Heart left ventricle (tissue), 16 donors: ENCODE measurements at regions of chr4 and their contacts with region 1.

Region 1: GRCh38 chr4:75736862-75737261 is 12.5 kb downstream of the USO1 start:
- DNase-seq: no peak
- ATAC-seq: peak; percentile 39 to 64 (median 50)
- H3K4me3 ChIP-seq: no peak overlapping the region
- H3K27ac ChIP-seq: peak overlapping the region in 4 of 12 donors; percentile 1 to 37 (median 26)
- H3K4me1 ChIP-seq: peaks cover 0 to 24% (median 13%) of the 10 kb centered on the region in 12 donors
- H3K27me3 ChIP-seq: no peaks in the 10 kb centered on the region
- CTCF ChIP-seq: no peak
- POLR2A ChIP-seq: no peak

Region 2: DNA sequence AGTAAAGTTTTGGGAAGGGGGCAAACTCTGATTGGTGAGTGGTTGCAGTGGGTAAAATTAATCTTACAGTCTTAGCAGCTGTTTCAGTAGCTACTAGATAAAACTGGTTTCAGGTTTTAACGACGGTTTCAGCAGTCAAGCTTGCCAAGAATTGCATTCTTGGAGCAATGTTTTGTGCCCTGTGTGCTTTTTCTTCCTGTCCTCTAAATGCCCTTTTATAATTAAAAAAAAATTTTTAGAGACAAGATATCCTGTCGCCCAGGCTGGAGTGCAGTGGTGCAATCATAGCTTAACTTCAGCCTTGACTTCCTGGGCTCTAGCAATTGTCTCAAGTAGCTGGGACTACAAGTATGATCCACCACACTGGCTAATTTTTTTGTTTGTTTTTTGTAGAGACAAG is 171.7 kb after region 1 on chr4:
- intact Hi-C with region 1: no loop called
- DNase-seq: no peak
- ATAC-seq: no peak
- H3K4me3 ChIP-seq: no peak overlapping the region
- H3K27ac ChIP-seq: no peak overlapping the region
- H3K4me1 ChIP-seq: peaks cover 0 to 7% (median 0%) of the 10 kb centered on the region in 12 donors
- H3K27me3 ChIP-seq: no peaks in the 10 kb centered on the region
- CTCF ChIP-seq: no peak
- POLR2A ChIP-seq: no peak

Region 3: DNA sequence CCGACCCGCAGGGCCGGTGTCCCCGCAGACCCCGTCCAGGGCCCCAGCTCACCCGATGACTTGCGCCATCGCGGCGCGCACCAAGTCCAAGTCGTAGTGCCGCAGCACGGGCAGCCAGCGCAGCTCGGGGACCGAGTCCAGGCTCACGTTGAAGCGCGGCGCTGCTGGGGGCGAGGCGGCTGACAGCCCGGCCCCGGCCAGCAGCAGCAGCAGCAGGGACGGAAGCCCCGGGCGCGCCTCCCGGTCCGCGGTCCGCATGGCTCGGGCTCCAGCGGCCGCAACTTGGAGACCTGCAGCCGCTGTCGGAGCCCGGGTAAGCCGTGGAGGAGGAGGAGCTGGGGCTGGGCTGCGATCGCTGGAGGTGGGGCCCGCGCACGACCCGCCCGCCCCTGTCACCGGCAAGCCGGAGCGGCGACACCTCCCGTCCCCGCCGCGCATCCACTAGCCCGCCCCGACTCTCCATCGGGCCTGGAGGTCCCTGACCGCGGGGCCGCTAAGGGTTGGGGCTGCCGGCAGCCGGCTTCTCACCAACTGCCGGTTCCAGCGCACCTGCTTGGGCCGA is 203.9 kb after region 1 on chr4 and contains the start of gene NAAA:
- intact Hi-C with region 1: loop called in 1 of 10 experiments (anchors 5 kb)
- DNase-seq: peak; percentile 74 to 92 (median 81)
- ATAC-seq: peak; percentile 77 to 97 (median 90)
- H3K4me3 ChIP-seq: peak within 1 kb of the TSS; percentile 64 to 94 (median 81)
- H3K27ac ChIP-seq: peak within 1 kb of the TSS in 11 of 12 donors; percentile 58 to 92 (median 80)
- H3K4me1 ChIP-seq: peaks cover 0 to 31% (median 4%) of the 10 kb centered on the region in 12 donors
- H3K27me3 ChIP-seq: no peaks in the 10 kb centered on the region
- CTCF ChIP-seq: peak in 6 of 12 donors; percentile 28 to 64 (median 46)
- POLR2A ChIP-seq: peak in 1 of 2 donors; percentile 56
- total RNA-seq, gene NAAA: 6.1 to 67.0 (median 21.3) TPM